ENCODE measurements at regions of chr9 and their contacts with region 1.

Region 1: DNA sequence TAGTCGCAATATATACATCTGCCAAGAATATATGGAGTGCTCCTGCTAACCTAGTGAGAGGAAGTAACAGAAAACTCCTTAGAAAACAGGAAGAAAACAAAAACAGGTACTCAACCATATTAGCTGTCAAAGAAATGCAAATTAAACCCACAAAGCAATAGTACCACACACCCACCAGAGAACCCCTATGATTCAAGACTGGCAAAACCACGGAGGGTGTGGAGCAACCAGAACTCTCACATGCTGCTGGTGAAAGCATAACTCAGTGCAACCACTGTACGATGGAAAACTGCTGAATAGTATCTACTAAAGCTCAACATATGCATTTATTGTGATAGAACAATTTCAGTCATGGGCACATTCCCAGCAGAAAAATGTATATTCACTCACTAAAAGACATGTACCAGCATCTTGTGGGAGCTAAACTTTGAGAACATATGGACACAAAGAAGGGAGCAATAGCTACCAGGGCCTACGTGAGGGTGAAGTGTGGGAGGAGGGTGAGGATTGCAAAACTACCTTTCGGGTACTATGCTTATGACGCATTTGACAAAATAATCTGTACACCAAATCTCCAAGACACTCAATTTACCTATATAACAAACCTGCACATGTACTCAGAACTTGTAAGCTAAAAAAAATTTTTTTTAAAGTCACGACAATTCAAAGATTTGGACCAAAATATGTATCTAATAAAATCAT is 34.0 kb downstream of the PTPN3 start:
- DNase-seq: peak; percentile 51
- H3K4me3 Mint-ChIP-seq: no peak overlapping the region
- H3K27ac Mint-ChIP-seq: peak overlapping the region; percentile 68
- H3K4me1 Mint-ChIP-seq: peaks cover 58% of the 10 kb centered on the region
- H3K27me3 Mint-ChIP-seq: peaks cover 31% of the 10 kb centered on the region

Region 2: GRCh38 chr9:109440797-109441287 is 23.2 kb before region 1 on chr9:
- CTCF ChIA-PET with region 1: interaction called, 206 read pairs
- POLR2A ChIA-PET with region 1: interaction called, 13 read pairs
- DNase-seq: peak; percentile 68
- H3K4me3 Mint-ChIP-seq: no peak overlapping the region
- H3K27ac Mint-ChIP-seq: peak overlapping the region; percentile 51
- H3K4me1 Mint-ChIP-seq: peaks cover 22% of the 10 kb centered on the region
- H3K27me3 Mint-ChIP-seq: peaks cover 42% of the 10 kb centered on the region

Region 3: DNA sequence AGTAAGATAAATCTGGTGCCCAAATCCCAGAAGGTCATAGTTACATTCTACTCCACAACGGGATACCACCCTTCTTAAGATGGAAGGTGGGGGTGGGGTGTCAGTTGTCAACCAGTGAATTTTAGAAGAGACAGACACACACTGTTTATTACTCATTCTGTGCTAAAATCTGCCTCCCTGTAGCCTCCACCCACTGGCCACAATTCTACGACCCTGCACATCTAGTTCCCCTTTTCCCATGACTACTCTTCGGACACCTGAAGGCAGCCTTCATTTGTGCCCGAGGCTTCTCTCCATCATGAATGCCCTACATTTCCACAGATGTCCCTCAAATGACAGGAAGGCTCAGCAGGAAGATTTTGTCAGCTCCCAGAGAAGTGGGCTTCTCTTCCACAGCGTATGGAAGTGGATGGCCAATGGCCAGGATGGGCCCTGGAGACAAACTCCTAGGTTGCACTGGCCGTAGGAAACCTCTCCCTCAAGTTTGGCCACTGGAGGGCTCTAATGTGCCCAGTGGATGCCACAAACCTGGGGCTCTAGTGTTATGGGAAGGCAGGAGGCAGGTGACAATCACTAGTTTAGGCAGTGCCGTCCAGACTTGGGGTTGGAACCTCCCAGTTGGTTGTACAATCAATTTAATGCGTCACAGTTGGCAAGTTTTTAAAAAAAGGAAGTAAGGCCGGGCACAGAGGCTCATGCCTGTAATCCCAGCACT is 12.6 kb before region 1 on chr9:
- CTCF ChIA-PET with region 1: interaction called, 60 read pairs
- POLR2A ChIA-PET with region 1: interaction called, 10 read pairs
- DNase-seq: no peak
- H3K4me3 Mint-ChIP-seq: no peak overlapping the region
- H3K27ac Mint-ChIP-seq: no peak overlapping the region
- H3K4me1 Mint-ChIP-seq: peaks cover 30% of the 10 kb centered on the region
- H3K27me3 Mint-ChIP-seq: peaks cover 27% of the 10 kb centered on the region

Region 4: DNA sequence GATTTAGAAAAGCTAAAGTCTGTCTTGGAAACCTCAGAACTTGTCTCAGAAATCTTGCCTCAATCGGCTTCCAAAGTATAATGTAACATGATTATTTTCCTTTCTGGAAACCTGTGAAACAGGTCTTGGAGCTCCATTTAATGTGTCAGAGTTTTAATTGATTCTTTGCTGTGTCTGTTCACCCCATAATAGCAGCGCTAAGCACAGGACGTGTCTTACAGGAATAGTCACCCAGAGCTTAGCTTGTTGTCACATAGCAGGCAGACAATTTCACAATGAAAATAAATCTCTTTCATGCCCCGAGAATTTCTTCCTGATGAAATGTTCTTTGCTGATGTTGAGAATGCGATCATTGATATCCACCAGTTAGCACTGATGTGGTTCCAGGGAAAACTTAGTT is 74.3 kb after region 1 on chr9:
- CTCF ChIA-PET with region 1: no interaction called
- POLR2A ChIA-PET with region 1: no interaction called
- DNase-seq: no peak
- H3K4me3 Mint-ChIP-seq: no peak overlapping the region
- H3K27ac Mint-ChIP-seq: no peak overlapping the region
- H3K4me1 Mint-ChIP-seq: no peaks in the 10 kb centered on the region
- H3K27me3 Mint-ChIP-seq: peaks cover 8% of the 10 kb centered on the region

Measured in activated CD4-positive, alpha-beta memory T cell treated with anti-CD3 and anti-CD28 coated beads, Interleukin-2, amount 10 ng/mL, durations not matched to agents 7 days and 5 days (primary cell).